ENCODE measurements at regions of chr15 and their contacts with region 1.

Region 1: DNA sequence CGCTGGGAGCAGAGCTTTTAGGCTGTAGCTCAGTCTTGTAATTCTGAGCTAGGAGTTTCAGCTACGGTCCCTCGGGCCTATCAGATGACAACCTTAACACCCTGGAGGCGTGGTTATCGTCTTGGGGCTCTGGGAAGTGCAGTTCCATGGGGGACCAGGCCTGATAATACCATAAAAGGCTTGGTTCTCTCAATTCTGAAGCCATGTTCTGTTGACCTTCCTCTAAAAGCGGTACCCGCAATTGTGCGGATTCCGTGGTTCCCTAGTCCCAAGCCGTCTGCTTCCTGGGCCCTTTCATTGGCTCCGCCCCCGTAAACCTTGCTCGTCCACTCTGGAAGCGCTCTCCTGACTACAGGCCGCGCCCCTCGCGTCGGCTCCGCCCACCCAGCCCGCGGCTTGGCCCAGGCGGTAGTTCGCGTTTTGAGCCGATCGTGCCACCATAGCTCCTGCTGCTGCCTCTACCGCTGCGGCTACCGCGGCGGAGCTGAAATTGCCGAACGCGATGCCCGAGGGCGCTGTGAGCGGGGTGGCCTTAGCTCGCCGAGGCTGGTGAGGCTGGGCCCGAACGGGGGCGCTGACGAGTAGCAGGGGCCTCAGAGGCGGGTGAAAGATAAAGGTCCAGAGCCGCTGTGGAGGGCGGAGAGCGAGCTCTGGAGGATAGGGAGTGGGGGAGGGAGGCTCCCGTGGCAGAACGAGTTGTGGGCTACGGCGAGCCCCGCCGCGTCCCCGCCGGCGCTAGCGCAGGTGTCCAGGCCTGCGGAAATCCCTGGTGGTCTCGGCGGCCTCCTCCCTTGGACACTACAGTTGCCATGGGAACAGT is at the start of gene MAPKBP1:
- DNase-seq: peak; percentile 99
- ATAC-seq: peak; percentile 93
- H3K4me3 Mint-ChIP-seq: peak within 1 kb of the TSS; percentile 86
- H3K27ac Mint-ChIP-seq: peak within 1 kb of the TSS; percentile 100
- H3K4me1 Mint-ChIP-seq: peaks cover 38% of the 10 kb centered on the region
- H3K27me3 Mint-ChIP-seq: no peaks in the 10 kb centered on the region
- CTCF ChIP-seq: 0 out of 2 replicates have a peak, but pooled peaks have one; percentile 37
- total RNA-seq, gene MAPKBP1: 11.0 to 14.5 TPM (median 12.9 TPM) in 3 replicates

Region 2: GRCh38 chr15:41603941-41604911 is 170.0 kb before region 1 on chr15:
- CTCF ChIA-PET with region 1: interaction called, 39 read pairs
- POLR2A ChIA-PET with region 1: no interaction called
- DNase-seq: peak; percentile 79
- ATAC-seq: peak; percentile 98
- H3K4me3 Mint-ChIP-seq: peak overlapping the region; percentile 46
- H3K27ac Mint-ChIP-seq: no peak overlapping the region; the same call in 1 of the 2 replicates
- H3K4me1 Mint-ChIP-seq: peaks cover 7% of the 10 kb centered on the region
- H3K27me3 Mint-ChIP-seq: no peaks in the 10 kb centered on the region; the same call in 1 of the 2 replicates
- CTCF ChIP-seq: peak; percentile 63

Region 3: DNA sequence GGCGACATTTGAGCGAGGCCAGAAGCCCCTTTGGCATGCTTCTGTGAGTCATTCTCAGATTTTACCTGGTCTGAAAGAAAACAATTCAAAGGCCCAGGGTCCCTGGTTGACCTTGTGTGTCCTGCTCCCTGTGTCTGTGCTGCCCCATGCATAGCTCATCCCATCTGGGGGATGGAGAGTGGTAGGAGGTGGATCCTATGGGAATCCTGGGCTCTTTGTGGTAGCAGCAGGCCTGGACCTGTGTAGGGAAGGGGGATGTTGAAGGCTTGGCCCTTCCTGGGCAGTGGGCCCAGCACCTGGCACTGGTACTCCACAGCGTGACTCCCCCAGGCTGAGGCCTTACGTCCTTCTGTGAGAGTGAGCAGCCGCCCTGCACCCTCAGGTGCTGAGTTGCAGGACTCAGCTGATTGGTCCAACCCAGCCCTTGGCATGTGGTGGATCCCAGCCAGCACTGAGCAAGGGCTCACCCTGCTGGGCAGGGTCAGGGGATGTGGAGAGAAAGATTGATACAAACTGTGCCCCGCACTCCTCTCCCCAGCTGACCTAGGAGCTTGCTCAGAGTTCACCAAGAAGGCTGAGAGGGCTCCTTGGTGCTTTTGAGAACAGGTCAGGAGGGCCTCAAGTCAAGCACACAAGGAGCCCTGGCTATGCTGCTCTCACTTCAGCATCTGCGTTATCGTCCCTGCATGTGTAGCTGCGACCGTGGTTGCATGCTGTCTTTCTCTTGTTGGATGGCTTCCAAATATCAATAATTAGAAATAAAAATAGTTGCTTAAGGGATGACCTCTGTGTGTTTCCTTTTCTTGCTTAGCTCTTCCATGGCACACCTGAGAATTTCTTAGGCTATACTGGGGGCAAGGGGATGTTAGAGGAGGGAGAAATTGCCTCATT is 32.3 kb after region 1 on chr15:
- CTCF ChIA-PET with region 1: interaction called, 158 read pairs
- POLR2A ChIA-PET with region 1: interaction called, 13 read pairs
- DNase-seq: peak; percentile 33
- ATAC-seq: peak; percentile 70
- H3K4me3 Mint-ChIP-seq: no peak overlapping the region
- H3K27ac Mint-ChIP-seq: 0 out of 2 replicates have a peak overlapping the region, but pooled peaks have one; percentile 14
- H3K4me1 Mint-ChIP-seq: peaks cover 6% of the 10 kb centered on the region
- H3K27me3 Mint-ChIP-seq: no peaks in the 10 kb centered on the region
- CTCF ChIP-seq: no peak

Region 4: GRCh38 chr15:41827880-41828806 is 53.9 kb after region 1 on chr15 and contains the start of gene JMJD7:
- CTCF ChIA-PET with region 1: interaction called, 56 read pairs
- POLR2A ChIA-PET with region 1: interaction called, 15 read pairs
- DNase-seq: peak; percentile 93
- ATAC-seq: peak; percentile 93
- H3K4me3 Mint-ChIP-seq: peak within 1 kb of the TSS; percentile 92
- H3K27ac Mint-ChIP-seq: peak within 1 kb of the TSS; percentile 39; the same call in 1 of the 2 replicates
- H3K4me1 Mint-ChIP-seq: peaks cover 7% of the 10 kb centered on the region
- H3K27me3 Mint-ChIP-seq: no peaks in the 10 kb centered on the region
- CTCF ChIP-seq: no peak
- total RNA-seq, gene JMJD7: 14.8 to 19.9 TPM (median 18.2 TPM) in 3 replicates

Region 5: GRCh38 chr15:41894791-41895463 is 120.7 kb after region 1 on chr15:
- CTCF ChIA-PET with region 1: interaction called, 10 read pairs
- POLR2A ChIA-PET with region 1: no interaction called
- DNase-seq: no peak
- ATAC-seq: peak; percentile 65
- H3K4me3 Mint-ChIP-seq: no peak overlapping the region
- H3K27ac Mint-ChIP-seq: peak overlapping the region; percentile 22; the same call in 1 of the 2 replicates
- H3K4me1 Mint-ChIP-seq: no peaks in the 10 kb centered on the region
- H3K27me3 Mint-ChIP-seq: no peaks in the 10 kb centered on the region
- CTCF ChIP-seq: no peak

Region 6: DNA sequence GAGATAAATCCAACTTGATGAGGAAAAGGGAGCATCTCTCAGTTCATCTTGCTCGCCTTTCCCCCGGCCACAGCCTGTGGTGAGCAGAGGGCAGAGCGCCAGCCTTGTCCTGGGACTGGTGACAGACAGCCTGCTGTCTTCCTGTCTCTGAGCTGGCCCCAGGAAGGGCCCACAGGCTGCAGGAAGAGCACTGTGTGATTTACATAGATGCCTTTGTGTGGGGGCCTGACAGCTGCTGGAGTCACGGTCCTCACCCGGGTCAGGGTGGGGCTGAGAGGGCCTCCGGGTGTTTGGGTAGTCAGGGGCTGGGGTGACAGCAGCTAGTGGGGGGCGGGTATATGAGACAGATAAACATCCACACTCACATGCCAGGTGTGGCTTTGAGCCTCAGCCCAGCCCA is 290.8 kb after region 1 on chr15:
- CTCF ChIA-PET with region 1: no interaction called
- POLR2A ChIA-PET with region 1: no interaction called
- DNase-seq: no peak
- ATAC-seq: 0 out of 2 replicates have a peak, but pooled peaks have one; percentile 15
- H3K4me3 Mint-ChIP-seq: no peak overlapping the region
- H3K27ac Mint-ChIP-seq: no peak overlapping the region
- H3K4me1 Mint-ChIP-seq: peaks cover 5% of the 10 kb centered on the region
- H3K27me3 Mint-ChIP-seq: no peaks in the 10 kb centered on the region; the same call in 1 of the 2 replicates
- CTCF ChIP-seq: no peak

Region 7: GRCh38 chr15:42691308-42691707 is 917.0 kb after region 1 on chr15:
- CTCF ChIA-PET with region 1: no interaction called
- POLR2A ChIA-PET with region 1: no interaction called
- DNase-seq: no peak
- ATAC-seq: no peak
- H3K4me3 Mint-ChIP-seq: no peak overlapping the region
- H3K27ac Mint-ChIP-seq: no peak overlapping the region
- H3K4me1 Mint-ChIP-seq: no peaks in the 10 kb centered on the region
- H3K27me3 Mint-ChIP-seq: no peaks in the 10 kb centered on the region
- CTCF ChIP-seq: no peak